Activated CD4-positive, alpha-beta memory T cell treated with anti-CD3 and anti-CD28 coated beads, Interleukin-2, amount 10 ng/mL, durations not matched to agents 7 days and 5 days (primary cell): ENCODE measurements at regions of chr17 and their contacts with region 1.

Region 1: DNA sequence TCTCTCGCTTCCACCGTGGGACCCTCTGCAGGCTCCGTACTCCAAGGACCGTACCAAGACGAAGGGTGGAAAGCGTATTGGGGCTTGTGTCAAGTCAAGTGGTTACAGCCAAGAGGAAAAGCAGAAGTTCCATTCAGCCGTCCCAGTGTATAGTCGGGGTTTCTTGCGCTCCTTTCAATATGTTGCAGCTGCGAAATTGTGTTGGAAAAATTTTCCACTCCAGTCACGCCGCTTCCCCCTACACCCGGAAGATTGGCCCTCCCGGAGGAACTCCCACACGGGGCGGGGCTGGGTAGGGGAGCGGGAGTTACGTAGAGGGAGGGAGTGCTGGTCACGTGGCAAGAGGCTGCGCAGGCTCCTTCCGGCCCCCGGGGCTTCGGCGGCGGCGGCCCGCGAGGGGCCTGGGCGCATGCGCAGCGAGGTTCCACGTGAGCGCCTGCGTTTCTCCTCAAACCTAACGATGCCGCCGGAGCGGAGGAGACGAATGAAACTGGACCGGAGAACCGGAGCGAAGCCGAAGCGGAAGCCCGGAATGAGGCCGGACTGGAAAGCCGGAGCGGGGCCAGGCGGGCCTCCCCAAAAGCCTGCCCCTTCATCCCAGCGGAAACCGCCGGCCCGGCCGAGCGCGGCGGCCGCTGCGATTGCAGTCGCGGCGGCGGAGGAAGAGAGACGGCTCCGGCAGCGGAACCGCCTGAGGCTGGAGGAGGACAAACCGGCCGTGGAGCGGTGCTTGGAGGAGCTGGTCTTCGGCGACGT is at the start of gene UTP18:
- DNase-seq: peak; percentile 96
- H3K4me3 Mint-ChIP-seq: peak within 1 kb of the TSS; percentile 86
- H3K27ac Mint-ChIP-seq: peak within 1 kb of the TSS; percentile 96
- H3K4me1 Mint-ChIP-seq: peaks cover 65% of the 10 kb centered on the region
- H3K27me3 Mint-ChIP-seq: no peaks in the 10 kb centered on the region
- total RNA-seq, gene UTP18: 44.4 to 45.2 TPM

Region 2: GRCh38 chr17:51166197-51166986 is 93.9 kb before region 1 on chr17 and contains the start of gene NME2:
- CTCF ChIA-PET with region 1: no interaction called
- POLR2A ChIA-PET with region 1: interaction called, 12 read pairs
- DNase-seq: peak; percentile 73
- H3K4me3 Mint-ChIP-seq: peak within 1 kb of the TSS; percentile 89
- H3K27ac Mint-ChIP-seq: peak within 1 kb of the TSS; percentile 93
- H3K4me1 Mint-ChIP-seq: peaks cover 39% of the 10 kb centered on the region
- H3K27me3 Mint-ChIP-seq: no peaks in the 10 kb centered on the region
- total RNA-seq, gene NME2: 364 to 374 TPM

Region 3: GRCh38 chr17:51537996-51538550 is 277.8 kb after region 1 on chr17:
- CTCF ChIA-PET with region 1: no interaction called
- POLR2A ChIA-PET with region 1: no interaction called
- DNase-seq: no peak
- H3K4me3 Mint-ChIP-seq: no peak overlapping the region
- H3K27ac Mint-ChIP-seq: no peak overlapping the region
- H3K4me1 Mint-ChIP-seq: peaks cover 13% of the 10 kb centered on the region
- H3K27me3 Mint-ChIP-seq: peaks cover 3% of the 10 kb centered on the region